ENCODE measurements at regions of chr14 and their contacts with region 1.

Region 1: DNA sequence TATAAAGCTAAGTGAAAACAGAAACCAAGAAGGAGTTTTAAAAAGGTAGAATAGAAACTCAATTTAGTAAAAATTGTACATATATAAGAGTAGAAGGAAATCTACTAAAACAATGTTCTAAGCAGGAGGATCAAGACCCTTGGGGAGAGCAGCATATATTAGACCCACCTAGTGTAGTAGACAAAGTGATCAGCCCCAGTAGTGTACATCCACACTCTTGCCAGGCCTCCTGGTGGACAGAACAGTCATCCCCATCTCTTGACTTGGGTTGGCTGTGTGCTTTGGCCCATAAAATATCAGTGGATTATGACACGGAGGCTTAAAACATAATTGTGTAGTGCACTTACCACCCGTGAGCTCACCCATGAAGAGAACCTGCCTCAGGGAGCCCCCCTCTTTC is 10.9 kb upstream of the OTUB2 start:
- DNase-seq: no peak
- H3K4me3 ChIP-seq: no peak overlapping the region
- H3K27ac ChIP-seq: no peak overlapping the region
- H3K4me1 ChIP-seq: no peaks in the 10 kb centered on the region
- H3K27me3 ChIP-seq: no peaks in the 10 kb centered on the region
- CTCF ChIP-seq: no peak

Region 2: DNA sequence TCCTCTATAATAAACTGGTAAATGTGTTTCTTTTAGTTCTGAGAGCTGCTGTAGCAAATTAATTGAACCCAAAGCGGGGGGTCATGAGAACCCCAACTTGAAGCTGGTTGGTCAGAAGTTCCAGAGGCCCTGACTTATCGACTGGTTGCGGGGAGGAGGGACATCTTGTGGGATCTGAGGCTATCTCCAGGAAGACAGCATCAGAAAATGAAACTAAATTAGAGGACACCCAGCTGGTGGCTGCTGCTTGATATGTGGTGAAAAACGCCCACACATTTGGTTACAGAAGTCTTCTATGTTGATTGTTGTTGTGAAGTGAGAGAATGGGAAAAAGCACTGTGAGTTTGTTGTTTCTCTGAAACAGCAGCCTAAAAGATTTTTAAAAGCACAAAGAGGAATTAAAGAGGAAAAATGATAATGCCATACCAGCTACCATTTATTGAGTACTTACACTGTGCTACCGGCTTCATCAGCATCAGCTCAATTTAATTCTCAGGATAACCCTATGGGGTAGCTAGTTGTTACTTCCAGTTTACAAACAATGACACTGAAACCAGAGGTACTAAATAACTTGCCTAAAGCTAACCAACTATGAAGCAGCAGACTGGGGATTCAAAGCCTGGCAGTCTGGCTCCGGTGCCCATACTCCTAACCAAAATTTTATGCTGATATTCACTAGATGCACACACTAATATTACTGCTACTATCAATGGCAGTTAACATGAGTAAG is 41.5 kb after region 1 on chr14:
- CTCF ChIA-PET with region 1: no interaction called
- dilution Hi-C with region 1: loop called (anchors 5 kb)
- in situ Hi-C with region 1: no loop called
- intact Hi-C with region 1: no loop called
- DNase-seq: no peak
- H3K4me3 ChIP-seq: no peak overlapping the region
- H3K27ac ChIP-seq: no peak overlapping the region
- H3K4me1 ChIP-seq: no peaks in the 10 kb centered on the region
- H3K27me3 ChIP-seq: no peaks in the 10 kb centered on the region
- CTCF ChIP-seq: no peak

Region 3: GRCh38 chr14:94110552-94111181 is 95.4 kb after region 1 on chr14 and contains the start of gene IFI27:
- CTCF ChIA-PET with region 1: no interaction called
- dilution Hi-C with region 1: no loop called
- in situ Hi-C with region 1: no loop called
- intact Hi-C with region 1: no loop called
- DNase-seq: no peak
- H3K4me3 ChIP-seq: no peak within 1 kb of the TSS
- H3K27ac ChIP-seq: no peak within 1 kb of the TSS
- H3K4me1 ChIP-seq: peaks cover 3% of the 10 kb centered on the region
- H3K27me3 ChIP-seq: no peaks in the 10 kb centered on the region
- CTCF ChIP-seq: no peak
- total RNA-seq, gene IFI27: 0.83 to 1.3 TPM

Region 4: DNA sequence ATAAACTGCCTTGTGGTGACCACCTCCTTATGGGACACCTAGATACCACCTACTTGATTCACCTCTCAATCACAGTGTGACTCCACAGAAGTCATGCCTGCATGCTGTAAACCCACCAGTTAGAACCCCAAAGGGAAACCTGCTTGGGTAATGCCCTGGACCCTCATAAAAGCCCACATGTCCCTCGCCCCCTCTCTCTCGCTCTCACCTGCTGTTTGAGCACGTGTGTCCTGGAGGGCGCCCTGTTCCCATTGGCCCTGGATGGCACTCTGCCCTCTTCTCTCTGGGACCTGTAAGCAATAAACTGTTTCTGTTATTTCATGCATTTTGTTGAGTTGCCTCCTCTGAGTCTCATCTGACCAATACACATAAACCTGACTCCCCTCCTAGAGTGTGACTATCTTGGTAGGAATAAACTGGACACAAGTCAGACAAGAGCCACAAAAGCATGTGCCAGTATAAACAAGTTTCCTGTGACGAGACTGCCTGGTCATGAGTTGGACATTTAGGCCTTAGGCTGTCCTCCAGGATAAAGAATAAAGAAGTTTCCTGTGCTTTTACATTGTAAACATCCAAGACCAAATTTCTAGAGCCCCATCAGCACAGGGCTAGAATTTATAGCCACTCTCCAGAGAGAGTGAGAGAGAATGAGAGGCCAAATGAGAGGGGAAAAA is 105.6 kb after region 1 on chr14:
- CTCF ChIA-PET with region 1: no interaction called
- dilution Hi-C with region 1: loop called (anchors 5 kb)
- in situ Hi-C with region 1: no loop called
- intact Hi-C with region 1: no loop called
- DNase-seq: peak; percentile 81
- H3K4me3 ChIP-seq: no peak overlapping the region
- H3K27ac ChIP-seq: no peak overlapping the region
- H3K4me1 ChIP-seq: peaks cover 5% of the 10 kb centered on the region
- H3K27me3 ChIP-seq: no peaks in the 10 kb centered on the region
- CTCF ChIP-seq: no peak

Measured in mammary epithelial cell (primary cell).